Endothelial cell of umbilical vein (primary cell): ENCODE measurements at regions of chr6 and their contacts with region 1.

Region 1: GRCh38 chr6:45432977-45433376 is 55.2 kb upstream of the SUPT3H start:
- DNase-seq: peak; percentile 82
- H3K4me3 ChIP-seq: no peak overlapping the region
- H3K27ac ChIP-seq: no peak overlapping the region
- H3K4me1 ChIP-seq: peaks cover 37% of the 10 kb centered on the region
- H3K27me3 ChIP-seq: peaks cover 12 to 14% of the 10 kb centered on the region in 2 experiments
- CTCF ChIP-seq: no peak
- POLR2A ChIP-seq: peak; percentile 29

Region 2: GRCh38 chr6:45479834-45480751 is 47.1 kb after region 1 on chr6:
- CTCF ChIA-PET with region 1: interaction called, 4 read pairs
- POLR2A ChIA-PET with region 1: no interaction called
- dilution Hi-C with region 1: no loop called
- intact Hi-C with region 1: loop called (anchors 5 kb)
- DNase-seq: peak; percentile 71
- H3K4me3 ChIP-seq: no peak overlapping the region
- H3K27ac ChIP-seq: no peak overlapping the region
- H3K4me1 ChIP-seq: peaks cover 23% of the 10 kb centered on the region
- H3K27me3 ChIP-seq: no peaks in the 10 kb centered on the region
- CTCF ChIP-seq: no peak
- POLR2A ChIP-seq: no peak